AG04450 (cell line): ENCODE measurements at regions of chr20 and their contacts with region 1.

Region 1: GRCh38 chr20:31508517-31509244 is 5.6 kb upstream of the HM13 start:
- DNase-seq: no peak
- H3K4me3 ChIP-seq: no peak overlapping the region
- H3K27ac ChIP-seq: no peak overlapping the region
- H3K27me3 ChIP-seq: peaks cover 10% of the 10 kb centered on the region
- CTCF ChIP-seq: no peak; the same call in 1 of the 2 replicates

Region 2: GRCh38 chr20:31485450-31486339 is 23.0 kb before region 1 on chr20:
- CTCF ChIA-PET with region 1: interaction called, 90 read pairs
- POLR2A ChIA-PET with region 1: interaction called, 11 read pairs
- DNase-seq: no peak
- H3K4me3 ChIP-seq: peak overlapping the region; percentile 34
- H3K27ac ChIP-seq: no peak overlapping the region
- H3K27me3 ChIP-seq: peaks cover 3% of the 10 kb centered on the region
- CTCF ChIP-seq: no peak

Region 3: GRCh38 chr20:31738729-31739561 is 230.3 kb after region 1 on chr20 and contains the start of gene TPX2:
- CTCF ChIA-PET with region 1: no interaction called
- POLR2A ChIA-PET with region 1: no interaction called
- DNase-seq: peak; percentile 86
- H3K4me3 ChIP-seq: peak within 1 kb of the TSS; percentile 97
- H3K27ac ChIP-seq: peak within 1 kb of the TSS; percentile 68
- H3K27me3 ChIP-seq: no peaks in the 10 kb centered on the region
- CTCF ChIP-seq: no peak; the same call in 1 of the 2 replicates
- polyA plus RNA-seq, gene TPX2: 19.8 and 24.4 TPM in 2 replicates

Region 4: GRCh38 chr20:31842471-31843157 is 333.9 kb after region 1 on chr20:
- CTCF ChIA-PET with region 1: no interaction called
- POLR2A ChIA-PET with region 1: no interaction called
- DNase-seq: no peak
- H3K4me3 ChIP-seq: no peak overlapping the region
- H3K27ac ChIP-seq: peak overlapping the region; percentile 2
- H3K27me3 ChIP-seq: peaks cover 7% of the 10 kb centered on the region
- CTCF ChIP-seq: 0 out of 2 replicates have a peak, but pooled peaks have one; percentile 5